Calu3 (cell line): ENCODE measurements at regions of chr3 and their contacts with region 1.

Region 1: GRCh38 chr3:186617038-186617946 is 4.4 kb downstream of the AHSG start:
- DNase-seq: peak; percentile 98
- H3K4me3 Mint-ChIP-seq: peak overlapping the region; percentile 64
- H3K27ac Mint-ChIP-seq: peak overlapping the region; percentile 78
- H3K4me1 Mint-ChIP-seq: peaks cover 27% of the 10 kb centered on the region
- H3K27me3 Mint-ChIP-seq: no peaks in the 10 kb centered on the region
- CTCF ChIP-seq: peak; percentile 98

Region 2: GRCh38 chr3:186259612-186260383 is 357.5 kb before region 1 on chr3:
- CTCF ChIA-PET with region 1: interaction called, 4 read pairs
- intact Hi-C with region 1: loop called (anchors 2 kb)
- DNase-seq: peak; percentile 93
- H3K4me3 Mint-ChIP-seq: no peak overlapping the region
- H3K27ac Mint-ChIP-seq: no peak overlapping the region
- H3K4me1 Mint-ChIP-seq: peaks cover 27% of the 10 kb centered on the region
- H3K27me3 Mint-ChIP-seq: peaks cover 53% of the 10 kb centered on the region
- CTCF ChIP-seq: peak; percentile 95

Region 3: GRCh38 chr3:186570096-186570940 is 47.0 kb before region 1 on chr3 and contains the start of gene DNAJB11:
- CTCF ChIA-PET with region 1: interaction called, 27 read pairs
- intact Hi-C with region 1: no loop called
- DNase-seq: peak; percentile 100
- H3K4me3 Mint-ChIP-seq: peak within 1 kb of the TSS; percentile 90
- H3K27ac Mint-ChIP-seq: peak within 1 kb of the TSS; percentile 93
- H3K4me1 Mint-ChIP-seq: peaks cover 37% of the 10 kb centered on the region
- H3K27me3 Mint-ChIP-seq: no peaks in the 10 kb centered on the region
- CTCF ChIP-seq: no peak
- total RNA-seq, gene DNAJB11: 171 and 181 TPM in 2 replicates

Region 4: GRCh38 chr3:186746008-186746407 is 128.7 kb after region 1 on chr3:
- CTCF ChIA-PET with region 1: interaction called, 24 read pairs
- intact Hi-C with region 1: no loop called
- DNase-seq: peak; percentile 92
- H3K4me3 Mint-ChIP-seq: peak overlapping the region; percentile 16
- H3K27ac Mint-ChIP-seq: peak overlapping the region; percentile 94
- H3K4me1 Mint-ChIP-seq: peaks cover 68% of the 10 kb centered on the region
- H3K27me3 Mint-ChIP-seq: no peaks in the 10 kb centered on the region
- CTCF ChIP-seq: no peak

Region 5: DNA sequence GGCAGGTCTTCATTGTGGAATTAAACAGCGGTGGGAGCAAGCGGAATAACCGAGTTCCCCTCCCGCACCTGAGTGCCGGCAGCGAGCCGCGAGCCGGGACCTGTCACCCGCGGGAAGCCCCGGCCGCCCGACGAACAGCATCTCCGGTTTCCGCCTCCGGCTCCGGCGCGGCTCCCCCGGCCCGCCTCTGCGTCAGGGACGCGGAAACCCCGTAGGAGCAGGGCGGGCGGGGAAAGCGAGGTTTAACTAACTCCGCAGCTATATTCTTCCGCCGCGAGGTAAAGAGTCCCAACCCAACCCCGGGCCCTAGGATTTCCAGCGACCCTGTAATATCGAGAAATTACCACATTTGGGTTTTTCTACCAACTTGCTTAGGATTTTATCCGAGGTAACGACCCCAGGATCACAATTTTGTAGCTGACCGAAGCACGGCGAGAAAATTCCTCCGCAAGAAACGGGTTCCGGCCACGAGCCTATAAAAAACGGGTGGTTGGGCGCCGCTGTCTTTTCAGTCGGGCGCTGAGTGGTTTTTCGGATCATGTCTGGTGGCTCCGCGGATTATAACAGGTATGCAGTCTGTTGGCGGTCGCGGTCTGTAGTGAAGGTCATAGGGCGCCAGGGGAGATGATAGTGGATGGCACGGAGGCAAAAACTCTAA is 165.9 kb after region 1 on chr3 and contains the start of gene EIF4A2:
- CTCF ChIA-PET with region 1: interaction called, 10 read pairs
- intact Hi-C with region 1: loop called (anchors 10 kb)
- DNase-seq: peak; percentile 98
- H3K4me3 Mint-ChIP-seq: peak within 1 kb of the TSS; percentile 81
- H3K27ac Mint-ChIP-seq: peak within 1 kb of the TSS; percentile 98
- H3K4me1 Mint-ChIP-seq: peaks cover 40% of the 10 kb centered on the region
- H3K27me3 Mint-ChIP-seq: peaks cover 17% of the 10 kb centered on the region
- CTCF ChIP-seq: no peak
- total RNA-seq, gene EIF4A2: 593 and 650 TPM in 2 replicates